Activated naive CD8-positive, alpha-beta T cell treated with anti-CD3 and anti-CD28 coated beads, Interleukin-2, amount 10 ng/mL, durations not matched to agents 7 days and 5 days (primary cell): ENCODE measurements at regions of chr1 and their contacts with region 1.

Region 1: GRCh38 chr1:27341525-27342252 is at the start of gene SYTL1:
- DNase-seq: peak; percentile 82
- ATAC-seq: peak; percentile 79
- H3K4me3 Mint-ChIP-seq: peak within 1 kb of the TSS; percentile 94
- H3K27ac Mint-ChIP-seq: peak within 1 kb of the TSS; percentile 96
- H3K4me1 Mint-ChIP-seq: peaks cover 29% of the 10 kb centered on the region
- H3K27me3 Mint-ChIP-seq: no peaks in the 10 kb centered on the region
- total RNA-seq, gene SYTL1: 103 to 105 TPM

Region 2: GRCh38 chr1:27321813-27322577 is 19.7 kb before region 1 on chr1 and contains the start of gene TMEM222:
- POLR2A ChIA-PET with region 1: interaction called, 14 read pairs
- DNase-seq: peak; percentile 98
- ATAC-seq: peak; percentile 96
- H3K4me3 Mint-ChIP-seq: peak within 1 kb of the TSS; percentile 98
- H3K27ac Mint-ChIP-seq: peak within 1 kb of the TSS; percentile 89
- H3K4me1 Mint-ChIP-seq: peaks cover 26% of the 10 kb centered on the region
- H3K27me3 Mint-ChIP-seq: peaks cover 6% of the 10 kb centered on the region
- total RNA-seq, gene TMEM222: 35.8 to 40.4 TPM

Region 3: DNA sequence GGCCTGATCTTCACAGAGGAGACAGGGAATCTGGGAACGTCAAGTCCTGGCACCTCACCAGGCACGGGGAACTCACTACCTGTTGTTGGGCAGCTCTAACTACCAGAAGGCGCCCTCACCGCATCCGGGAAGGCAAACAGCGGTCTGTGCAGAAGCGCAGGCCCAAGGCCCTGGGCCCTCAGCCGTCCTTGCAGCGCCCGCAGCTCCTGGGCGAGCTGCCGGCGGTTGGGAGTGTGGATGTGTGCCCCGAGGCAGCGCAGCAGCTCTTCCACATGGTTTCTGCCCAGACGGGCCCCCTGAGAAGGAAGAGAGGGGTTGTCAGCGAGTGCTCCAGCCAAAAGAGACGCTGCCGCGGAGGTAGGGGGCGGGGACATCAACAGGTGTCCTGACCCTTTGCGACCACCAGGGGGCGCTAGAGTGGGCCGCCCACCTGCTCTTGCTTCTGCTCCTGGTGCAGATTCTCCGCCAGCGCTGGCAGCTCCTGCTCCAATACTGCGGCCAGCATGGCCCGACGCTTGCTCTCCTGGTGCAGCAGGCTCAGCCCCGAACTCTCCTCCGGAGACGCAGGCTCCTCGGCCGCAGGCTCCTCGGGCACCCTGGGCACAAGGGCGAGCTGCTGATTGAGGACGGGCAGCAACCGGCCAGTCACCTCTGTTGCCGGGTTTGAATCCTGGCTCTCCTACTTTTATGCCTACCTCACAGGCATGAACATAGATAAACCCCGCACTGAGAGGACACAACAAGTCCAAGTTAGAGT is 15.8 kb after region 1 on chr1:
- POLR2A ChIA-PET with region 1: interaction called, 29 read pairs
- DNase-seq: peak; percentile 89
- ATAC-seq: peak; percentile 71
- H3K4me3 Mint-ChIP-seq: peak overlapping the region; percentile 78
- H3K27ac Mint-ChIP-seq: peak overlapping the region; percentile 86
- H3K4me1 Mint-ChIP-seq: peaks cover 27% of the 10 kb centered on the region
- H3K27me3 Mint-ChIP-seq: peaks cover 6% of the 10 kb centered on the region

Region 4: DNA sequence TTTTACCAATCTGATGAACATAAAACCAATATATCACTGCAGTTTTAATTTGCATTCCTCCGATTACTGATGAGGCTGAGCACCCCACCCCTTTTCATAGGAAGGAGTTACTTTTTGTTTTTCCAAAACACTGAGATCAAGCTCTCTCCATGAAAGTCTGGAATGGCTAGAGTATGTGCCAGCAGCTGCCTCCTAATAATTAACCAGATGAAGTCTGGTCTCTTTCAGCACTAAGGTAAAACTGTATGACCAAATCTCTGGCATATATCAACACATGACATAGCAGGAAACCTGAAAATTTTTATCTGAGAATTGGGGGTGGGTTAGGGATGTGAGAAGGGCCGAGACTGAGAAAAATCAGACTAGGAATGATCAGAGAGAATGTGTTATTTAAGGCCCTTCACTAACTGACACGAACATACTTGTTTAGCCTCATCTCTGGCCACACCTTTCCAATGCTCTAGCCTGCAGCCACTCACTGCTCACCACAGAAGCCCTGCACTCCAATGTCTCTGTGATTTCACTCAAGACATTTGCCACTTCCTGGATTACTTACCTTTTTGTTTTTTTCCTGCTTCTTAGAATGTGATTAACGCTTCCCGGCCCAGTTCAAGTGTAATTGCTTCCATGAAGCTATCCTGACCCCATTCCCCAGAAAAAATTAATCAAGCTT is 113.6 kb after region 1 on chr1:
- POLR2A ChIA-PET with region 1: no interaction called
- DNase-seq: no peak
- ATAC-seq: peak; percentile 88
- H3K4me3 Mint-ChIP-seq: peak overlapping the region; percentile 68
- H3K27ac Mint-ChIP-seq: peak overlapping the region; percentile 84
- H3K4me1 Mint-ChIP-seq: peaks cover 36% of the 10 kb centered on the region
- H3K27me3 Mint-ChIP-seq: no peaks in the 10 kb centered on the region